ENCODE measurements at regions of chr6 and their contacts with region 1.

Region 1: DNA sequence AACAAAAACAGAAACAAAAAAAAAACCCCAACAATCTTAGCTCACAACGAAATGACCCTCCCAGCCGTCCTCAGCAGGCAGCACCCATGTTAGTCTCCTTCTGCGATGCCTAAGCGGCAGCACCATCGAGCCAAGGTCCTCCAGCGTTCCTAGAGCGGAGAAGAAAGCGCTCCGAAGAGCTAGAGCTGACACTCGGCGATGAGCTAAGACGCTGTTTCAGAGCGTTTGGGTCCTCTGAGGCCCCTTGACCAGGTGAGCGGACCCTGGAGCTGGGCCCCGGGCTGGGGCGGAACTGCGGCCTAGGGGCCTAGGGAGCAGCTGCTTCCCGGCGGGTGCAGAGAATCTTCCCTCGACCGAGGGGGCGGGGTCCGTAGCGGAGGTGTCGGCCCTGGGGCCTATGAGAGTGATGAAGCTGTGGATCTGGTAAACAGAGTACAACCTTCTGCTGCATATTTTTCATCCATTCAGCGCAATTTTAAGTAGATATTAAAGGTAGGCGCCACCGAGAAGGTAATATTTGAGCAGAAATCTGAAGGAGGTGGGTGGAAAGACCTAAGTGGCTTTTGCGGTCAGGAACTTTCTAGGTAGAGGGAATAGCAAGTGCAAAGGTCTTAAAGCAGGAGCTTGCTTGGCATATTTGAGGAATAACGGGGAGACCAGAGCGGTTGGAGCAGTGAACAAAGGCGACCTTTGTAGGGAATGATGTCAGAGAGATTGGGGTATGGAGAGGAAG is at the start of gene ZSCAN26:
- DNase-seq: peak; percentile 92
- H3K4me3 ChIP-seq: peak within 1 kb of the TSS; percentile 57
- H3K4me3 Mint-ChIP-seq: no peak within 1 kb of the TSS
- H3K27ac Mint-ChIP-seq: no peak within 1 kb of the TSS
- H3K4me1 ChIP-seq: peaks cover 15% of the 10 kb centered on the region
- H3K4me1 Mint-ChIP-seq: no peaks in the 10 kb centered on the region
- H3K27me3 ChIP-seq: no peaks in the 10 kb centered on the region
- H3K27me3 Mint-ChIP-seq: no peaks in the 10 kb centered on the region
- CTCF ChIP-seq: no peak
- total RNA-seq, gene ZSCAN26: 7.2 and 7.8 TPM in 2 replicates

Region 2: DNA sequence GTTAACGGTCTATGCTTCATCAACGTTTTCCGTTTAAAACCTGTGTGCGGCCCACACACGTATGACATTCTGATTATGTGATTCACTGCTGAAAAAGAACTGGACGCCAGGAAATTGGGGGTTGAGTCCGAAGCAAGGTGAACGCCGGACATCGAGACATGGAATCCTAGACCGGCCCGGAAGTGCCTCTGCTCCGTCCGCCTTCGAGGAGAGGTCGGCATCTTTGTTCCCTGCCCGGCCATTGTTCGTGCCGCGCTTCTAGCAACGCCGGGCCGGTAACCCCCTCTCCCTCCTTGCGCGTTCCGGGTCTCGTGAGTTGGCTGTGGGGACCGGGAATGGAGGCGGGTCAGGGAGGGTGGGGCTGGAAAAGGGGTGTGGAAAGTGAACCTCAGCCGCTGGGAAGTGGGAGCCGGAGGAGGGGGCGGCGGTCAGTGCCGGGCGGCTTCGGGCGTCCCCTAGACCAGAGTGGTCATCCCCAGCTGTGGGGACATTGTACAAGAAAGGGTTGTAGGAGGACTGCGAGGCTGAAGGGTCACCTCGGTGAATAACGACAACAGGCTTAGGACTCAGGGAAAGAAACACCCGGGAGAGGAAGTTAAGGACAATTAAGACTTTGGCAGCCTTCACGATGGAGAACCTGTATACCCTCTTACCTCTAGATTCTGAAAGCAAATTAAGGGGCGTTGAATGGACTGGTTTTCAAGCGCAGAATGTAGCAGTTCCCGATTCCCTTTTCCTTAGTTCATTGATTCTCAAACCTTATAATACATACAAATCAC is 41.9 kb before region 1 on chr6 and contains the start of gene ZSCAN9:
- CTCF ChIA-PET with region 1: no interaction called
- POLR2A ChIA-PET with region 1: no interaction called
- intact Hi-C with region 1: loop called (anchors 1 kb)
- DNase-seq: peak; percentile 88 to 90
- H3K4me3 ChIP-seq: peak within 1 kb of the TSS; percentile 72
- H3K4me3 Mint-ChIP-seq: peak within 1 kb of the TSS; percentile 96
- H3K27ac Mint-ChIP-seq: peak within 1 kb of the TSS; percentile 82
- H3K4me1 ChIP-seq: peaks cover 5% of the 10 kb centered on the region; the same call in 1 of the 2 replicates
- H3K4me1 Mint-ChIP-seq: peaks cover 9% of the 10 kb centered on the region
- H3K27me3 ChIP-seq: peaks cover 1% of the 10 kb centered on the region; the same call in 1 of the 2 replicates
- H3K27me3 Mint-ChIP-seq: no peaks in the 10 kb centered on the region
- CTCF ChIP-seq: no peak
- total RNA-seq, gene ZSCAN9: 13.7 and 13.9 TPM in 2 replicates

Region 3: GRCh38 chr6:28281288-28282064 is 14.3 kb after region 1 on chr6 and contains the start of gene PGBD1:
- CTCF ChIA-PET with region 1: no interaction called
- POLR2A ChIA-PET with region 1: interaction called, 5 read pairs
- intact Hi-C with region 1: loop called (anchors 1 kb)
- DNase-seq: peak; percentile 81 to 84
- H3K4me3 ChIP-seq: peak within 1 kb of the TSS; percentile 74
- H3K4me3 Mint-ChIP-seq: peak within 1 kb of the TSS; percentile 85
- H3K27ac Mint-ChIP-seq: no peak within 1 kb of the TSS
- H3K4me1 ChIP-seq: 0 out of 2 replicates have a peak, but pooled peaks cover 4% of the 10 kb centered on the region
- H3K4me1 Mint-ChIP-seq: peaks cover 10% of the 10 kb centered on the region
- H3K27me3 ChIP-seq: no peaks in the 10 kb centered on the region
- H3K27me3 Mint-ChIP-seq: no peaks in the 10 kb centered on the region
- CTCF ChIP-seq: no peak
- total RNA-seq, gene PGBD1: 3.6 and 3.8 TPM in 2 replicates